Upper lobe of right lung (tissue), 1 donor: ENCODE measurements at regions of chrX and their contacts with region 1.

Region 1: GRCh38 chrX:107766470-107767150 is 9.0 kb downstream of the TSC22D3 start:
- DNase-seq: no peak
- ATAC-seq: peak; percentile 78
- H3K4me3 ChIP-seq: no peak overlapping the region
- H3K27ac ChIP-seq: no peak overlapping the region
- H3K4me1 ChIP-seq: peaks cover 3% of the 10 kb centered on the region
- H3K27me3 ChIP-seq: no peaks in the 10 kb centered on the region
- CTCF ChIP-seq: no peak

Region 2: GRCh38 chrX:107654872-107655761 is 111.5 kb before region 1 on chrX:
- intact Hi-C with region 1: loop called (anchors 10 kb)
- DNase-seq: peak; percentile 81
- ATAC-seq: peak; percentile 93
- H3K4me3 ChIP-seq: no peak overlapping the region
- H3K27ac ChIP-seq: no peak overlapping the region
- H3K4me1 ChIP-seq: no peaks in the 10 kb centered on the region
- H3K27me3 ChIP-seq: no peaks in the 10 kb centered on the region
- CTCF ChIP-seq: peak; percentile 66